H1 (cell line): ENCODE measurements at regions of chr19 and their contacts with region 1.

Region 1: GRCh38 chr19:18281082-18282020 is at the start of gene JUND:
- DNase-seq: peak; percentile 90 to 97
- H3K4me3 ChIP-seq: peak within 1 kb of the TSS; percentile 88 to 99 (median 92)
- H3K27ac ChIP-seq: peak within 1 kb of the TSS; percentile 95
- H3K4me1 ChIP-seq: peaks cover 4 to 14% (median 8%) of the 10 kb centered on the region in 4 experiments; a peak in 5 of 7 replicates
- H3K27me3 ChIP-seq: no peaks in the 10 kb centered on the region; a peak in 1 of 7 replicates
- CTCF ChIP-seq: no peak
- EP300 ChIP-seq: peak; percentile 80 to 96
- POLR2A ChIP-seq: peak in 1 of 2 experiments; percentile 99; a peak in 2 of 3 replicates
- RAD21 ChIP-seq: 0 out of 4 replicates have a peak, but pooled peaks of 1 of the 2 experiments have one; percentile 0
- total RNA-seq, gene JUND: 77.5 and 95.8 TPM in 2 replicates

Region 2: DNA sequence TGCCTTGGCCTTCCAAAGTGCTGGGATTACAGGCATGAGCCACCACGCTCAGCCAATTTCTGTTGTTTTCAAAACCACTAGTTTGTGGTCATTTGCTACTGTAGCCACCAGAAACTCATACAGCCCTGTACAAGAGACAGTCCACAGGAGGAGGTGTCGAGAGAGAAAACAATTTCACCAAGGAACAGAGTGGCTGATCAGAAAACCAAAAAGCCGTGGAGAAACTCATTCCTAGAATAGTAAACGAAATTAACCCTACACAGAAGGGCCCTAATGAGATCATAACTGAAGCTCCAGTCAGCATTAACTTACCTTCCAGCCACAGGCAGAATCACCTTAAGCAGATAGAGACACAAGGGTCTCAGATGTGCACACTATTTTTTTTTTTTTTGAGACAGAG is 352.3 kb before region 1 on chr19:
- CTCF ChIA-PET with region 1: no interaction called
- POLR2A ChIA-PET with region 1: no interaction called
- DNase-seq: no peak
- H3K4me3 ChIP-seq: no peak overlapping the region
- H3K27ac ChIP-seq: no peak overlapping the region
- H3K4me1 ChIP-seq: peaks cover 0 to 4% (median 2%) of the 10 kb centered on the region in 4 experiments; a peak in 3 of 7 replicates
- H3K27me3 ChIP-seq: no peaks in the 10 kb centered on the region
- CTCF ChIP-seq: no peak
- EP300 ChIP-seq: no peak
- POLR2A ChIP-seq: no peak
- RAD21 ChIP-seq: no peak

Region 3: DNA sequence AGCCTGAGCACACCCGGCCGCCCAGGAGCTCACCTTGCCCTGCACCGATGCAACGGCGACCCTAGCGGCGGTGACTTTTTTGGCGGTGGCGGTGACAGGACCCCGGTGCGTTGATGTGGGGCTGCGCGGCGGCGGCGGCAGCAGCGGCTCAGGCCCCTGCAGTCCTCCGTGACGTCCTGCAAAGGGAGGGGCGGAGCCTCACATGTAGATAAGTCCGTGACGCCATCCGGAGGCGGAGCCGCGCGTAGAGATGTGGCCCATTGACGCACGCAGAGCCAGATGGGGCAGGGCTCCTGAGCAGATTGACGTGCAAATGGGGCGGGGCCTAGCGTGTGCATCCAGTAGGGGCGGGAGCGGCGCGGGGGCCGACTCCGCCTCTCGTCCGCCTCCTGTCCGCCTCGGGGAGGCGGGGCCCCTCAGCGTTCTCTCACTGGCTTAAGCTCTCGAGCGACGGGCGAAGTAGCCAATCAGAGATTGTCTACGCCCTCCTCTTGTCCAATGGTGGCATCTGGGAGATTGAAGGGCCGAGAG is 77.4 kb before region 1 on chr19 and contains the start of gene RAB3A:
- CTCF ChIA-PET with region 1: interaction called, 7 read pairs
- POLR2A ChIA-PET with region 1: interaction called, 59 read pairs
- DNase-seq: peak; percentile 97 to 100
- H3K4me3 ChIP-seq: peak within 1 kb of the TSS; percentile 56 to 83 (median 78)
- H3K27ac ChIP-seq: peak within 1 kb of the TSS; percentile 76
- H3K4me1 ChIP-seq: peaks cover 0 to 11% (median 7%) of the 10 kb centered on the region in 4 experiments; a peak in 5 of 7 replicates
- H3K27me3 ChIP-seq: no peaks in the 10 kb centered on the region; a peak in 1 of 7 replicates
- CTCF ChIP-seq: peak in 2 of 3 experiments; percentile 14 to 20; a peak in 1 of 4 replicates
- EP300 ChIP-seq: no peak
- POLR2A ChIP-seq: no peak
- RAD21 ChIP-seq: no peak
- total RNA-seq, gene RAB3A: 14.2 and 14.3 TPM in 2 replicates

Region 4: DNA sequence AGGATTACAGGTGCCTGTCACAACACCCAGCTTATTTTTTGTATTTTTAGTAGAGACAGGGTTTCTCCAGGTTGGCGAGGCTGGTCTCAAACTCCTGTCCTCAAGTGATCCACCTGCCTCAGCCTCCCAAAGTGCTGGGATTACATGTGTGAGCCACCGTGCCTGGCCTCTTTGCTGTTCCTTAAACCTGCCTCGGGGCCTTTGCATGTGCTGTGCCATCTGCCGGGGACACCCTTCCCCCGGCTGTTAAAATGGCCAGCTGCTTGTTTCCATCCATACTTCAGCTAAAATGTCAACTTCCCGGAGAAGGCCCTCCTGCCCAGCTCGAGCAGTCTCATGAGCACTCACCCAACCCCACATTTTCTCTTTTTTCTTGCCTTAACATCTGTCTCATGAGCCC is 36.1 kb before region 1 on chr19:
- CTCF ChIA-PET with region 1: interaction called, 172 read pairs
- POLR2A ChIA-PET with region 1: interaction called, 62 read pairs
- DNase-seq: no peak
- H3K4me3 ChIP-seq: no peak overlapping the region
- H3K27ac ChIP-seq: no peak overlapping the region
- H3K4me1 ChIP-seq: peaks cover 0 to 4% (median 0%) of the 10 kb centered on the region in 4 experiments; a peak in 1 of 7 replicates
- H3K27me3 ChIP-seq: no peaks in the 10 kb centered on the region
- CTCF ChIP-seq: no peak
- EP300 ChIP-seq: no peak
- POLR2A ChIP-seq: no peak
- RAD21 ChIP-seq: no peak

Region 5: DNA sequence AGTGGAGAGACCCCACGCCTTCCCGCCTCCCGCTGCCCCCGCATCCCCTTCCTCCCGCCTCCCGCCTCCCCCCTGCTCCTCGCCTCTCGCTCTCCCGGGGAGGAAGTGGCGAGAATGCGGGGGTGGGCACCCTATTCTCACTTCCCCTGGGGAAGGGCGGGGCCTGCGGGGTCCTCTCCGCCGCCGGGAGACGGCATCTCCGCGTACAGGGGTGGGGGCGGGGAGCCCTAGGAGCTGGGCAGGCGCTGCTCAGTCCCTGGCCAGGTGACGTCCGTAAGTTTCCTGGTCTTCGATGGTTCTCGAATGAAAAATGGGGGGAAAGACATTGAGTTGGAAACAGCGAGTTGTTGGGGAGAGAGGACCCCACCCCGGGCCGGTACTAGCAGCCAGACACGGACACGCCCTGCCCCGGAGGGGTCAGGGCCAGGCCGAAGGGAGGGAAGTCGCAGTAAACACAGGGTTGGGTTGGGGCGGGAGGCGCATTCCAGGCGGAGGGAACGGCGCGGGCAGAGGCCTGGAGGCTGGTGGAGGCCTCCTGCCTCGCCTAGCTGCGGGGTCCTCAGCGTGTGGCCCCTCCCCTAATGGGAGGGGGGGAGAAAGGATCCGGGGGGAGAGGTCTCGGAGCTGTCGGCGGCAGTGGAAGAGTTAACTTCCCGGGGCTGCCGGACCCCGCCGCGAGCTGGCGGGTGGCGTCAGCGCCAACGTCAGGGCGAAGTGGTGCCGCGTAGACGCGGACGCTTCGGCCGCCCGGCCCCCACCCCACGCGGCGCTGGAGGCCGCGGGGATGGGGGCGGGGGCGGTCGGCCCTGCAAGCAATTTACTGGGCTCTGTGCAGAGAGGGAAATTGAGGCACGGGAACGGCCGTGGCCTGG is 10.5 kb after region 1 on chr19:
- CTCF ChIA-PET with region 1: interaction called, 52 read pairs
- POLR2A ChIA-PET with region 1: interaction called, 237 read pairs
- DNase-seq: peak in 1 of 2 experiments; percentile 88
- H3K4me3 ChIP-seq: peak overlapping the region; percentile 55 to 75 (median 66)
- H3K27ac ChIP-seq: peak overlapping the region; percentile 81
- H3K4me1 ChIP-seq: peaks cover 4 to 35% (median 27%) of the 10 kb centered on the region in 4 experiments
- H3K27me3 ChIP-seq: peaks cover 0 to 5% (median 0%) of the 10 kb centered on the region in 4 experiments; a peak in 2 of 7 replicates
- CTCF ChIP-seq: no peak
- EP300 ChIP-seq: no peak
- POLR2A ChIP-seq: no peak; a peak in 1 of 3 replicates
- RAD21 ChIP-seq: no peak

Region 6: DNA sequence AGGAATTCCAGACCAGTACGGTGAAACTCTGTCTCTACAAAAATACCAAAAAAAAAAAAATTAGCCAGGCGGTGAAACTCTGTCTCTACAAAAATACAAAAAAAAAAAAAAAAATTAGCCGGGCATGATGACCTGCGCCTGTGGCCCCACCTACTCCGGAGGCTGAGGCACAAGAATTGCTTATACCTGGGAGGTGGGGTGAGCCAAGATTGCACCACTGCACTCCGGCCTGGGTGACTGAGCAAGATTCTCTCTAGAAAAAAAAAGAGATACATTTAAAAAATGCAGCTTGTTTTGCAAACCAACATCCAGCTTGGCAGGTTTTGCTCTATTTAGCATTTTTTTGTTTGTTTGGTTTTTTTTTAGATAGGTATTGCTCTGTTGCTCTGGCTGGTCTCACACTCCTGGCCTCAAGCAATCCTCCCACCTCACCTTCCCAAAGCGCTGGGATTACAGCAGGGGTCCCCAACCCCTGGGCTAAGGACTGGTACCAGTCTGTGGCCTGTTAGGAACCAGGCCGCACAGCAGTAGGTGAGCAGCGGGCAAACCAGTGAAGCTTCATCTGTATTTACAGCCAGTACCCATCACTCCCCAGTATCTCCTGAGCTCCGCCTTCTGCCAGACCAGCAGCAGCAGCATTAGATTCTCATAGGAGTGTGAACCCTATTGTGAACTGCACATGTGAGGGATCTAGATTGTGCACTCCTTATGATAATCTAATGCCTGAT is 52.5 kb after region 1 on chr19:
- CTCF ChIA-PET with region 1: interaction called, 179 read pairs
- POLR2A ChIA-PET with region 1: interaction called, 224 read pairs
- DNase-seq: no peak
- H3K4me3 ChIP-seq: no peak overlapping the region
- H3K27ac ChIP-seq: no peak overlapping the region
- H3K4me1 ChIP-seq: peaks cover 0 to 4% (median 2%) of the 10 kb centered on the region in 4 experiments; a peak in 5 of 7 replicates
- H3K27me3 ChIP-seq: no peaks in the 10 kb centered on the region
- CTCF ChIP-seq: no peak
- EP300 ChIP-seq: no peak
- POLR2A ChIP-seq: no peak
- RAD21 ChIP-seq: no peak

Region 7: DNA sequence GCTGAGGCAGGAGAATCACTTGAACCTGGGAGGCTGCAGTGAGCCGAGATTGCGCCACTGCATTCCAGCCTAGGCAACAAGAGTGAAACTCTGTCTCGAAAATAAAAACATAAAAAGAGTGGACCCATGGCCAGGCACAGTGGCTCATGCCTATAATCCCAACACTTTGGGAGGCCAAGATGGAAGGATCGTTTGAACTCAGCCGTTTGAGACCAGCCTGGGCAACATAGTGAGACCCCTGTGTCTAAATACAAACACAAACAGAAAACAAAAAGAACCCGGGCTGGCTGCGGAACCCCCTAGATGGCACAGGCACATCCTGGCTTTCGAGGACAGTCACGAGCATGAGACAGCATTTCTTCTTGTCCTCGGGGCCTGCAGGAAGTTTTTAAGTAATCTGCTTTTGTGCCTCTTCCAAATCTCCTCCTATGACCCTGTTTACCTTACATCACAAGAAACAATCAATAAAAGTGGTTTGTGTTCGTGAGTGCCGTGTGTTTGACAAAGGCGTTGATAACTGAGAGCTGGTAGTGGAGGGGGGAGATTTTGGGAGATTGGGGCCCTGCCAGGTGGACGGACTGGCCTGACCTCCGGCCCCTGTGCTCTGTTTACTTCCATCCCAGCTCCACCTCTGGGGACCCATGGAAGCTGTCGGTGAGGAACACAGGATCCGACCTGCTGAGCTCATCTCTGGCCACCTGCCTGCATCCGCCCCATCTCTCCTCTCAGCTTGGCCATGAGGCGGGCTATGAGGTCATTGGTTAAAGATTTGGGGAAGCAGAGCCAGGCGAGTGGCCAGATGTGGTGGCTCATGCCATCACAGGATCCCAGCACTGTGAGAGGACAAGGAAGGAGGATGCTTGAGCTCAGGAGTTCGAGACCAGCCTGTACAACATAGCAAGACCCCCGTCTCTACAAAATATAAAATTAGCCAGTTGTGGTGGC is 98.7 kb after region 1 on chr19:
- CTCF ChIA-PET with region 1: interaction called, 5 read pairs
- POLR2A ChIA-PET with region 1: interaction called, 10 read pairs
- DNase-seq: no peak
- H3K4me3 ChIP-seq: no peak overlapping the region
- H3K27ac ChIP-seq: no peak overlapping the region
- H3K4me1 ChIP-seq: peaks cover 0 to 3% (median 1%) of the 10 kb centered on the region in 4 experiments; a peak in 1 of 7 replicates
- H3K27me3 ChIP-seq: no peaks in the 10 kb centered on the region
- CTCF ChIP-seq: no peak
- EP300 ChIP-seq: no peak
- POLR2A ChIP-seq: no peak
- RAD21 ChIP-seq: no peak

Region 8: DNA sequence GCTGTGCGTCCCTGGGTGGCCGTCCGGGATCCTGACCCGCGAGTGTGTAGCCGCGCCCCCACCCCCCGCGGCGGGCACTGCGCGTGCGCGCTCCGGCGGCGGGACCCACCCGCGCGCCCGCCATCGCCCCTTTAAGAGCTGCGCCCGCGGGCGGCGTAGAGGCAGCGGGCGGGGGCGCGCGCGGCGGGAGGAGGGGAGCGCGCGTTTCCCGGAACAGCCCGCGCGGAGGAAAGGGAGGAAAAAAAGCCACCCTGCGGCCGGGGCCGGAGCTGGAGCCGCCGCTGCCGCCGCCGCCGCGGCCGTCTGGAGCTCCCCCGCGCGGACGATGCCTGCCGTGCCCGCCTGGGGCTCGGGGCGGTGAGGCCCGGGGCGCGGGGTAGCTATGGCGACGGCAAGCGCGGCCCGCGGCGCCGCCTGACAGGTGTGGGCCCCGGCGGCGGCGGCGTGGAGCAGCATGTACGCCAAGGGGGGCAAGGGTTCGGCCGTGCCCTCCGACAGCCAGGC is 137.9 kb after region 1 on chr19 and contains the start of gene SSBP4:
- CTCF ChIA-PET with region 1: interaction called, 54 read pairs
- POLR2A ChIA-PET with region 1: interaction called, 72 read pairs
- DNase-seq: peak in 1 of 2 experiments; percentile 87
- H3K4me3 ChIP-seq: peak within 1 kb of the TSS; percentile 33 to 63 (median 46)
- H3K27ac ChIP-seq: no peak within 1 kb of the TSS
- H3K4me1 ChIP-seq: peaks cover 0 to 39% (median 25%) of the 10 kb centered on the region in 4 experiments; a peak in 6 of 7 replicates
- H3K27me3 ChIP-seq: peaks cover 5 to 29% (median 23%) of the 10 kb centered on the region in 4 experiments
- CTCF ChIP-seq: peak; percentile 32 to 80 (median 39)
- EP300 ChIP-seq: peak; percentile 62 to 98; a peak in 2 of 3 replicates
- POLR2A ChIP-seq: no peak
- RAD21 ChIP-seq: peak in 1 of 2 experiments; percentile 37; a peak in 2 of 4 replicates
- total RNA-seq, gene SSBP4: 26.4 and 30.5 TPM in 2 replicates